ENCODE measurements at regions of chr12 and their contacts with region 1.

Region 1: GRCh38 chr12:55728939-55729823 is at the start of gene CD63:
- DNase-seq: peak; percentile 67
- ATAC-seq: peak; percentile 88
- H3K4me3 ChIP-seq: peak within 1 kb of the TSS; percentile 72 to 76
- H3K27ac ChIP-seq: peak within 1 kb of the TSS; percentile 94
- H3K4me1 ChIP-seq: peaks cover 31% of the 10 kb centered on the region
- H3K27me3 ChIP-seq: no peaks in the 10 kb centered on the region
- CTCF ChIP-seq: no peak
- total RNA-seq, gene CD63: 879 TPM

Region 2: DNA sequence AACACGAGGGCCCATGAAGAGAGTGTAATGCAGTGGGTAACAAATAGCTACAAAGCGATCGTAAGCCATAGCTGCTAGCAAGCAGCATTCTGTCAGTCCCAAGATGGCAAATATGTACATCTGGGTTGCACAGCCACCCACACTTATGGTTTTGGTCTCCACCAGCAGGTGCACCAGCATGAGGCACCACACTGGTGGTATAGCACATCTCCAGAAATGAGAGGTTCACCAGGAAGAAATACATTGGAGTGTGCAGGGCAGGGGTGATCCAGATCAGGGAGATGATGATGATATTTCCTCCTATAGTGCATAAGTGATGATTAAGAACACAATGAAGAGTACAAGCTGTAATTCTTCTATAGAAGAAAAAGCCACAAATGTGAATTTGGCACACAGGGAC is 534.8 kb before region 1 on chr12:
- CTCF ChIA-PET with region 1: no interaction called
- POLR2A ChIA-PET with region 1: no interaction called
- in situ Hi-C with region 1: no loop called
- intact Hi-C with region 1: loop called (anchors 10 kb)
- DNase-seq: no peak
- ATAC-seq: no peak
- H3K4me3 ChIP-seq: no peak overlapping the region
- H3K27ac ChIP-seq: no peak overlapping the region
- H3K4me1 ChIP-seq: no peaks in the 10 kb centered on the region
- H3K27me3 ChIP-seq: no peaks in the 10 kb centered on the region; the same call in 1 of the 2 replicates
- CTCF ChIP-seq: no peak

Region 3: GRCh38 chr12:55392032-55392795 is 337.0 kb before region 1 on chr12:
- CTCF ChIA-PET with region 1: no interaction called
- POLR2A ChIA-PET with region 1: interaction called, 11 read pairs
- in situ Hi-C with region 1: no loop called
- intact Hi-C with region 1: no loop called
- DNase-seq: no peak
- ATAC-seq: no peak
- H3K4me3 ChIP-seq: no peak overlapping the region
- H3K27ac ChIP-seq: no peak overlapping the region
- H3K4me1 ChIP-seq: no peaks in the 10 kb centered on the region
- H3K27me3 ChIP-seq: peaks cover 2% of the 10 kb centered on the region; the same call in 1 of the 2 replicates
- CTCF ChIP-seq: no peak

Region 4: DNA sequence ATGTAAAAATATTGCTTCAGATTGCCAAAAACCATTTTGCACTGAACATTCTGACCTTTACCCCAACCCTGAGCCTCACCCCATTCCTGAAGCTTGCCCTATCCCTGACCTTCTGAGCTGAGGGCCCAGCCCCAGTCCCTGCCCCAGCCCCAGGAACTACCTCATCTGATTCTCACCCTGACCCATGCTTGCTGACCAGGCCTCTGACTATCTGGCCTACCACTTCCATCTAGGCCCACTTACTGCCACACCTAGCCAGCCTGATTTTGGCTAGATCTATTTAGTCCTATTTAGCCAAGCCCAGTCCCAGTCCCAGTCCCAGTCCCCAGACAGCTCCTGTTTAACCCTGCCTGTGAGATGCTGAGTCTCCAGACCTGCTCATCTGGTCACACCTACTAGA is 58.9 kb before region 1 on chr12:
- CTCF ChIA-PET with region 1: interaction called, 11 read pairs
- POLR2A ChIA-PET with region 1: no interaction called
- in situ Hi-C with region 1: no loop called
- intact Hi-C with region 1: no loop called
- DNase-seq: no peak
- ATAC-seq: no peak
- H3K4me3 ChIP-seq: no peak overlapping the region
- H3K27ac ChIP-seq: no peak overlapping the region
- H3K4me1 ChIP-seq: no peaks in the 10 kb centered on the region
- H3K27me3 ChIP-seq: 0 out of 2 replicates have a peak, but pooled peaks cover 3% of the 10 kb centered on the region
- CTCF ChIP-seq: no peak

Region 5: GRCh38 chr12:55681142-55682077 is 47.8 kb before region 1 on chr12:
- CTCF ChIA-PET with region 1: interaction called, 15 read pairs
- POLR2A ChIA-PET with region 1: no interaction called
- in situ Hi-C with region 1: no loop called
- intact Hi-C with region 1: no loop called
- DNase-seq: no peak
- ATAC-seq: peak; percentile 94
- H3K4me3 ChIP-seq: peak overlapping the region; percentile 38 to 64
- H3K27ac ChIP-seq: 0 out of 2 replicates have a peak overlapping the region, but pooled peaks have one; percentile 18
- H3K4me1 ChIP-seq: peaks cover 5% of the 10 kb centered on the region; the same call in 1 of the 2 replicates
- H3K27me3 ChIP-seq: peaks cover 2% of the 10 kb centered on the region; the same call in 1 of the 2 replicates
- CTCF ChIP-seq: peak; percentile 81

Region 6: GRCh38 chr12:55692631-55693322 is 36.4 kb before region 1 on chr12:
- CTCF ChIA-PET with region 1: no interaction called
- POLR2A ChIA-PET with region 1: no interaction called
- in situ Hi-C with region 1: no loop called
- intact Hi-C with region 1: no loop called
- DNase-seq: no peak
- ATAC-seq: no peak
- H3K4me3 ChIP-seq: no peak overlapping the region
- H3K27ac ChIP-seq: no peak overlapping the region
- H3K4me1 ChIP-seq: no peaks in the 10 kb centered on the region
- H3K27me3 ChIP-seq: no peaks in the 10 kb centered on the region
- CTCF ChIP-seq: no peak

Region 7: DNA sequence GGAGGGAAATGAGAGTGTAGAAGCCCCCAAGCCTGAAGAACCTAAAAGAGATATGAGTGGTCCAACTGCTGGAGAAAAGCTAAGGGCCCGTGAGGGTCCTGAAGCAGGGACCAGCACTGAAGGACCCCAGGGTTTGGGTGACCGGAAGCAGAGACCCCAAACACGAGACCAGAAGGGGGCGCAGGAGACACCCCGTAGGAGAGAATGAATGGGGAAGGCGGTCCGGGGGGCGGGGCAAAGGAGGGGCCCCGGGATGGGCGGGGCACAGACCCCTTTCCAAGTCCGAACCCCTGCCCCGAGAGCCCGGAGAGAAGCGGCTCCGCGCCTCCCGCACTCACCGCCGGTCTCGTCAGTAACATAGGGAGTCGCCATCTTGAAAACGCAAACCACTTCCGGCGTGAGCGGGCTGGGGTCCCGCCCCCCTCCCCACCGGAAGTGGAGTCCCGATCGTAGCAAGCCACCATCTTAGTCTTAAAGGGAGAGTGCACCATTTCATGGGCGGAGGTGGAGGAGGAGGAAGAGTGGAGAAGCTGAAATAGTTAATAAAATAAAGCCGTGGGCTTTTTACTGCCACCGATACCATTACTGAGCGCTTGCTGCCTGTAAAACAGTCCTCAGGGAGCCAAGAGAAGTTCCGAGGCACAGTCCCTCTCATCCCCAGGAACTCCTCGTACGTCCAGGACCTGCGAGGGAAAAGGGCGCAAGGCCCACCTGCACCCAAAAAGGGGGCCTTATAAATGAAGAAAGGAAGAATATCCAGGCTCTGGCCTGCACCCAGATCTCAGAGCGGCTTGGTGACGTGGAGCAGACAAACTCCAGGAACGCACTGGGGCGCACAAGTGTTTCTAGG is 197.8 kb after region 1 on chr12:
- CTCF ChIA-PET with region 1: no interaction called
- POLR2A ChIA-PET with region 1: no interaction called
- in situ Hi-C with region 1: no loop called
- intact Hi-C with region 1: loop called (anchors 5 kb)
- DNase-seq: peak; percentile 84
- ATAC-seq: peak; percentile 89
- H3K4me3 ChIP-seq: peak overlapping the region; percentile 67 to 91
- H3K27ac ChIP-seq: peak overlapping the region; percentile 100
- H3K4me1 ChIP-seq: peaks cover 32% of the 10 kb centered on the region
- H3K27me3 ChIP-seq: no peaks in the 10 kb centered on the region
- CTCF ChIP-seq: peak; percentile 96

Measured in Panc1 (cell line).